ENCODE measurements at regions of chr15 and their contacts with region 1.

Region 1: DNA sequence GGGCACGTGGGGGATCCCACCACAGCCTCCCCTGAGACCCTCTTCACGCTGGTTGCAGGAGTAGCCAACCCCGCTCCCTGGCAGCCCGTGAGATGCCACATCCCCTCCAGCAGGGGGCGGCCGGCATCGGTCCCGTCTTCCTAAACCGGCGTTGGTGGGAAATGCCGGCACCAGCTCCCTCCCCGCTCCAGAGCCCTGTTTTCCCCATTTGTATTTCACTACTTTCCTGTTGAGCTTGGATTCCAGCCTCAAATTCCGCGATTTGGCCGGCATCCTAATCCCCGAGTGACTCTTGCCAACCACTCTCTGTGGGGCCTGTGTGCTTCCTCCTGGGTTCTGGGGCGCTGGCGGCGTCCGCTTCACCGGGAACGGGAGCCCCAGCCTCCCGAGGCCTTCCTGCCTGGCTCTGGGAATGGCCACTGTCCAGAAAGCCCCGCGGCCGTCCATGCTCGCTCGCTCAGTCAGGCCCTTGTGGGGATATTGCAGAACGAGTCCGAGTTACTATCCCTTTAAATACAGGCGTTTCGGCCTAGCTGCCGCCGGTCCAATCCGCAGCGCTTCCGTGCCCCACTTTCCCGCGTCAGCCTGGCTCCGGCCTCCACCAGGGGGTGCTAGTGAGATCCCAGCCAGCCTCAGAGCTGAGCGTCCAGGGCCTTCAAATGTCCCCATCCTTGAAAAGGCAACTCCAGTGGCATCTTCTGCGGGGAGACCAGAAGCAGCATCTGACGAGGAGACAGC is 8.1 kb upstream of the ADAMTS17 start:
- DNase-seq: peak; percentile 89
- ATAC-seq: peak; percentile 97
- H3K4me3 Mint-ChIP-seq: peak overlapping the region; percentile 77
- H3K27ac Mint-ChIP-seq: peak overlapping the region; percentile 79
- H3K4me1 Mint-ChIP-seq: peaks cover 6% of the 10 kb centered on the region
- H3K27me3 Mint-ChIP-seq: peaks cover 21% of the 10 kb centered on the region

Region 2: DNA sequence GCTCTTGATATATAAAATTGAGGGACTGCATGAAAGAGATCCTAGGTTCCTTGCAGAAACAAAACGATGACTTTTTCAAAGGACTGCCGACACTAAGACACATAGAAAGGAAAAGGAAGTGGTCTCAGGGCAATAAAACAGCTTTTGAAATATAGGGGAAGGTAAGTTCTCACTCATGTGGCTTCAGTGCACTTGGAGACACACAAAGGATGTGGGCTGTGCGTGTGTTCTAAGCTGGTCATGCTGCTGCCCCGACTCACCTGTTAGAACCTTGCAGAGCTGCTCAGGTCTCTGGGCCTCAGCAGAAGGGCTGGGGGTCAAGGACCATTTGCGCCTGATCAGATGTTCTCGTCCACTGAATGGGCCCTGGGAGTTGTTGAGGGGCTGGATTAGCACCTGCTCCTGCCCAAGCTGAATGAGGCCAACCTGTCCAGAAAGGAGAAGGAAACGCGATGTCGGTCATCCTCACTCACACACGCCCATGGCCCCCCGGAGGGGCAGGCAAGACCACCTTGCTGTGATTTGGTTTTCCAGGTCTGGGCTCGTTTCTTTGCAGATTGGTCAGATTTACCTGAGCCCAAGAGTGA is 19.1 kb before region 1 on chr15:
- CTCF ChIA-PET with region 1: interaction called, 127 read pairs
- DNase-seq: peak; percentile 78
- ATAC-seq: peak; percentile 86
- H3K4me3 Mint-ChIP-seq: peak overlapping the region; percentile 28
- H3K27ac Mint-ChIP-seq: peak overlapping the region; percentile 80
- H3K4me1 Mint-ChIP-seq: peaks cover 37% of the 10 kb centered on the region
- H3K27me3 Mint-ChIP-seq: peaks cover 5% of the 10 kb centered on the region

Region 3: DNA sequence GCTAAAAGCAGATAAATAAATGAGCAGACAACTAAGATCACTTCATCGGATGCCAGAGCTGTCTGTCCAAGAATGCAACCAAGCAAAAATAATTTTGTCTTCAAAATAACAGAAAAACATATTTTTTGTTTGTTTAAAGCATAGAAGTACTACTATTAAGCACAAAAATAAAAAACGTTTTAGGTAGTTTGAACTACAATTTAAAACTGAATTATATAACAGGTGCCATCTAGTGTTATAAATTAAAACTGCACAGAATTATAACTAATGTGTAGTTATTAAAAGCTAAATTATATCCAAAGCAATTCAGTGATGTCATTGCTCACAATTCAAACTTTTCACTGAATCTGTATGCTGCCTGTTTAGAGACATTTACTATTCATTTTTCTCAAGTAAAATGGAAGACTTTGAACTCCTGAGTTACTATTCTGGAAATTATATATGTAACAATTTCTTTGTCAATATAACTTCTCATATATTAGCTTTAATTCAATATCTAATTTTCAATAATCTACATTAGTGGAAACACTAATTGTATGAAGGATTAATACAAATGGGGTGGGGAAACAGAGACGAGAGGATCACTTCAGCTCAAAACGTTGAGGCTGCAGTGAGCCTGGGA is 222.6 kb after region 1 on chr15:
- CTCF ChIA-PET with region 1: interaction called, 57 read pairs
- DNase-seq: no peak
- ATAC-seq: no peak
- H3K4me3 Mint-ChIP-seq: no peak overlapping the region
- H3K27ac Mint-ChIP-seq: peak overlapping the region; percentile 79
- H3K4me1 Mint-ChIP-seq: peaks cover 22% of the 10 kb centered on the region
- H3K27me3 Mint-ChIP-seq: no peaks in the 10 kb centered on the region

Region 4: GRCh38 chr15:100602064-100602822 is 252.4 kb after region 1 on chr15 and contains the starts of genes ASB7 and LINS1:
- CTCF ChIA-PET with region 1: interaction called, 31 read pairs
- DNase-seq: peak; percentile 100
- ATAC-seq: peak; percentile 86
- H3K4me3 Mint-ChIP-seq: no peak within 1 kb of the TSS
- H3K27ac Mint-ChIP-seq: no peak within 1 kb of the TSS
- H3K4me1 Mint-ChIP-seq: peaks cover 57% of the 10 kb centered on the region
- H3K27me3 Mint-ChIP-seq: no peaks in the 10 kb centered on the region
- total RNA-seq, gene ASB7: 17.9 to 22.1 TPM
- total RNA-seq, gene LINS1: 30.1 to 30.8 TPM

Region 5: GRCh38 chr15:100873029-100873677 is 523.3 kb after region 1 on chr15:
- CTCF ChIA-PET with region 1: interaction called, 16 read pairs
- DNase-seq: peak; percentile 61
- ATAC-seq: peak; percentile 53
- H3K4me3 Mint-ChIP-seq: no peak overlapping the region
- H3K27ac Mint-ChIP-seq: no peak overlapping the region
- H3K4me1 Mint-ChIP-seq: no peaks in the 10 kb centered on the region
- H3K27me3 Mint-ChIP-seq: peaks cover 27% of the 10 kb centered on the region